GM10248 (cell line): ENCODE measurements at regions of chr10 and their contacts with region 1.

Region 1: GRCh38 chr10:6647811-6648526 is 67.9 kb upstream of the PRKCQ start:
- DNase-seq: peak; percentile 59
- CTCF ChIP-seq: peak; percentile 54

Region 2: GRCh38 chr10:6637053-6637452 is 10.9 kb before region 1 on chr10:
- CTCF ChIA-PET with region 1: interaction called, 15 read pairs
- POLR2A ChIA-PET with region 1: no interaction called
- DNase-seq: no peak
- CTCF ChIP-seq: no peak

Region 3: DNA sequence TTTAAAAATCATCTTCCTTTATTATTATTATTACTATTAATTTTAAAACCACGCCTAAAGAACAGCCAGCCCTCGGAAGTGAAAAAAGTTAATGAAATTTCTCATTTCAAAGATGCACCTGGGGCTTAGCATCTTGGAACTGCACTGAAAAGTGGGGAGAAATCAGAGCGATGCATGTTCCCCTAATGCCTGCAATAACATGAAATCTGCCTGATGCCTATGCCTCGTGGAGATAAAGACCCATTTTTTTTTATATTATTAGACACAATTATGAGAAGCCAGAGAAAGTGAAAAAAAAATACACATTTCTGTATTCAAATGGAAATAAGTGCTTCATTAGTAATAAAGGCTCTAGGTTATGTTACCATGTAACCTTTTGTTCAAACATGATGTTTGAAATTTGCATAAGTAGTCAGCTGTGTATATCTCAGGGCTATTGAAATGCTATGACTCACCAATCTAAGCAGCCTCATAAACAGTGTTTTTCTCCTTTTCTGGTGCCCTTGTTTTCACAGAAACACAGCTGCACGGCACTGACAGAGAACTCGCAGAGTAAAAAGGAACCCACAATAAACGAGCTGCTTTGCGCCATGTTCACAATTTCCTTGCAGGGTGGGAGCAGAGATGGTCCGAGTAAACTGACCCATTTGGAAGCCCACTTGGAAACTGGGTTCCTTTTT is 108.0 kb after region 1 on chr10:
- CTCF ChIA-PET with region 1: no interaction called
- POLR2A ChIA-PET with region 1: no interaction called
- DNase-seq: peak; percentile 16
- CTCF ChIP-seq: no peak

Region 4: GRCh38 chr10:7161484-7162250 is 513.7 kb after region 1 on chr10:
- CTCF ChIA-PET with region 1: no interaction called
- POLR2A ChIA-PET with region 1: no interaction called
- DNase-seq: no peak
- CTCF ChIP-seq: no peak